ENCODE measurements at regions of chr1 and their contacts with region 1.

Region 1: DNA sequence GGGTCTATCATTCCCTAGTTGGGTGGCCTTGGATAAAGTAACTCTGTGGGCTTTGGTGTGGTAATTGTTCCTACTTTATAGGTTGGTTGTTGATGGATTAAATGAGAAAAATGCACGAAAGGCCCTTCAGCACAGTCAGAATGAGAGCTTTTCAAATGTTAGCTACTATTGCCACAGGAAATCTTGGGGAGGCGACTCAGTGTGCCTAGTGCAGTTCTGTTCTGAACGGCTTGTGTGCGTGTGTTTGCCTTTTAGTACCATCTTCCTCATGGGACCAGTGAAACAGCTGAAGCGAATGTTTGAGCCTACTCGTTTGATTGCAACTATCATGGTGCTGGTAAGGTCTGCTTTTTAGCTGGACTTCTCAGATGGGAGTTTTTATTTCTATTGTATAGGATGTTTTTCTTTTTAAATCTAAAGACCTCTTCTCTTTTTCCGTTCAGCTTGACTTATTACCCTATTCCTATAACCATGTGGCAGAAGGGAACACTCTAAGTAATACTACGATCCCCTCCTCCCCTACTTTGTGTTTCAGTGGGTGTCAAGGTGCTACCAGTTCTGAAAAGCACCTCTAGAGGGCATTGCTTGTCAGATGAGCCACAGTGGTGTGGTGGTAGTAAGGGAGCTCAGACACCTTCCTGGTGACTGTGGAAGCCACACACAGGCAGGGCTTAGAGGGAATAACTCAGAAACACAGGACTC is 9.2 kb downstream of the SFT2D2 start:
- DNase-seq: peak in 9 of 14 experiments; percentile 6 to 72 (median 30)
- ATAC-seq: peak; percentile 96
- H3K4me3 ChIP-seq: no peak overlapping the region
- H3K4me3 Mint-ChIP-seq: no peak overlapping the region
- H3K27ac ChIP-seq: no peak overlapping the region
- H3K27ac Mint-ChIP-seq: peak overlapping the region; percentile 18
- H3K4me1 ChIP-seq: peaks cover 22% of the 10 kb centered on the region
- H3K4me1 Mint-ChIP-seq: peaks cover 63% of the 10 kb centered on the region
- H3K27me3 ChIP-seq: no peaks in the 10 kb centered on the region
- H3K27me3 Mint-ChIP-seq: no peaks in the 10 kb centered on the region
- CTCF ChIP-seq: peak; percentile 54

Region 2: GRCh38 chr1:168291222-168291837 is 56.3 kb after region 1 on chr1:
- CTCF ChIA-PET with region 1: no interaction called
- POLR2A ChIA-PET with region 1: no interaction called
- intact Hi-C with region 1: no loop called
- DNase-seq: no peak
- ATAC-seq: no peak
- H3K4me3 ChIP-seq: no peak overlapping the region
- H3K4me3 Mint-ChIP-seq: no peak overlapping the region
- H3K27ac ChIP-seq: no peak overlapping the region
- H3K27ac Mint-ChIP-seq: no peak overlapping the region
- H3K4me1 ChIP-seq: no peaks in the 10 kb centered on the region
- H3K4me1 Mint-ChIP-seq: peaks cover 7% of the 10 kb centered on the region
- H3K27me3 ChIP-seq: no peaks in the 10 kb centered on the region
- H3K27me3 Mint-ChIP-seq: no peaks in the 10 kb centered on the region
- CTCF ChIP-seq: no peak

Region 3: GRCh38 chr1:168365719-168366479 is 130.9 kb after region 1 on chr1:
- CTCF ChIA-PET with region 1: interaction called, 4 read pairs
- POLR2A ChIA-PET with region 1: no interaction called
- intact Hi-C with region 1: loop called in 1 of 2 experiments (anchors 10 kb)
- DNase-seq: peak in 4 of 14 experiments; percentile 32 to 71 (median 61)
- ATAC-seq: peak; percentile 27
- H3K4me3 ChIP-seq: no peak overlapping the region
- H3K4me3 Mint-ChIP-seq: no peak overlapping the region
- H3K27ac ChIP-seq: no peak overlapping the region
- H3K27ac Mint-ChIP-seq: no peak overlapping the region
- H3K4me1 ChIP-seq: peaks cover 40% of the 10 kb centered on the region
- H3K4me1 Mint-ChIP-seq: peaks cover 28% of the 10 kb centered on the region
- H3K27me3 ChIP-seq: no peaks in the 10 kb centered on the region
- H3K27me3 Mint-ChIP-seq: no peaks in the 10 kb centered on the region
- CTCF ChIP-seq: peak; percentile 31

Region 4: GRCh38 chr1:169485544-169486278 is 1250.7 kb after region 1 on chr1 and contains the start of gene SLC19A2:
- CTCF ChIA-PET with region 1: no interaction called
- POLR2A ChIA-PET with region 1: no interaction called
- intact Hi-C with region 1: loop called in 1 of 2 experiments (anchors 5 kb)
- DNase-seq: peak; percentile 82 to 97 (median 90)
- ATAC-seq: peak; percentile 99
- H3K4me3 ChIP-seq: peak within 1 kb of the TSS; percentile 73
- H3K4me3 Mint-ChIP-seq: peak within 1 kb of the TSS; percentile 98
- H3K27ac ChIP-seq: peak within 1 kb of the TSS; percentile 54 to 65
- H3K27ac Mint-ChIP-seq: peak within 1 kb of the TSS; percentile 92
- H3K4me1 ChIP-seq: peaks cover 20% of the 10 kb centered on the region
- H3K4me1 Mint-ChIP-seq: peaks cover 48% of the 10 kb centered on the region
- H3K27me3 ChIP-seq: no peaks in the 10 kb centered on the region
- H3K27me3 Mint-ChIP-seq: no peaks in the 10 kb centered on the region
- CTCF ChIP-seq: peak; percentile 44
- total RNA-seq, gene SLC19A2: 3.6 to 3.7 TPM

Measured in CD4-positive, alpha-beta T cell (primary cell).